Astrocyte of the cerebellum (primary cell): ENCODE measurements at regions of chr1 and their contacts with region 1.

Region 1: GRCh38 chr1:242477944-242478343 is 46.6 kb downstream of the PLD5 start:
- DNase-seq: no peak
- H3K4me3 ChIP-seq: no peak overlapping the region
- CTCF ChIP-seq: no peak

Region 2: DNA sequence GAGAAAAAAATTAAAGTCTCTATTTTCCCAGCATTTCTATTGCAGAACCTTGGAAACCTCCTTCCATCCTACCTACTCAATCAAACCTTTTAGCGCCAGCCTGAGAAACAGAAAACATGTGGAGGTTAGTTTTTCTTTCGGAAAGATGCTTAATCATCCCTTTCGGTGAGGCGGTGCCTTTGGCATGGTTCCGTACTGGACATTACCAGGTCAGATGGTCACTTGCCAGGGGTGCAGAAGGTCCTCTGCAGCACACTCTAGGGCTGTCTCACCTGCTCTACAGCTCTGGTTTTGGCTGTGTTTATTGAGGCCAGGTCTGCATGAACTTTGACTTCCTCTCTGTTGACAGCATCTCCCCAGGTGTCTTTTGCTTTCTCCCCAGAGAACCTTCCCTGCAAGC is 75.0 kb before region 1 on chr1:
- in situ Hi-C with region 1: no loop called
- DNase-seq: no peak
- H3K4me3 ChIP-seq: no peak overlapping the region
- CTCF ChIP-seq: no peak

Region 3: GRCh38 chr1:242416657-242417056 is 61.3 kb before region 1 on chr1:
- in situ Hi-C with region 1: no loop called
- DNase-seq: no peak
- H3K4me3 ChIP-seq: no peak overlapping the region
- CTCF ChIP-seq: no peak

Region 4: DNA sequence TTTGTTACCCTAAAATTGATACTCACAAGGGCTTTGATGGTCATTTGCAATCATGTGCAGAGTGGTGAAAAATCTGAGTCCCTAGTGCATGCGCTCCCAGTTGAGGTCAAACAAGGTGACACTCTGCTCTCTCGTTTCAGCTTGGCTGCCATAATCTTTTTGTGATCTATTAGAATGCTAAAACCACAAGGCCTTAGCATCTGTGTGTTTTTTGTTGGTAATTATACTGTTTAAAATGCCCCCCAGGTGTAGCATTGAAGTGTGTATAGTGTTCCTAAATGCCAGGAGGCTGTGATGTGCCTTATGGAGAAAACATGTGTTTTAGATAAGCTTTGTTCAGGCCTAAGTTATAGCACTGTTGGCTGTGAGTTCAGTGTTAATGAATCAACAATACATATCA is 42.7 kb before region 1 on chr1:
- in situ Hi-C with region 1: no loop called
- DNase-seq: no peak
- H3K4me3 ChIP-seq: no peak overlapping the region
- CTCF ChIP-seq: no peak

Region 5: GRCh38 chr1:242544071-242544470 is 66.1 kb after region 1 on chr1:
- in situ Hi-C with region 1: no loop called
- DNase-seq: no peak
- H3K4me3 ChIP-seq: no peak overlapping the region
- CTCF ChIP-seq: no peak

Region 6: DNA sequence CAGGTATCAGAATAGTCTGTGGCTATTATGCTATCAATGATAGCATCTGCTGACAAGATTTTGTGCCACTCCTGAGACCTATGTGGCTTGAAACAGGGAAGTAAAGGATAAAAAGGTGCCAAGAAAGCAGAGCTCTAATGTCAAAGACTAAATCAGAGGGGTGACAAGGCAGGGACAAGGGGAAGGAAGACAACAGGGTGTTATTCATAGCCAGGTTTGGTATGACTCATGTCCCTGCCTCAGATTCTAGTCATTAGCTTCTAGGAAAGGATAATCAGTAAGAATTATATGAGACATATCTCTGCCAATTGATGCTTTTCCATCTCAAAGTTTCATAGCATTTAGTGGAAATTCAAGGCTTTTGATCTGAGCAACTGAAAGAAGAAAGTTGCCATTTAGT is 78.3 kb after region 1 on chr1:
- in situ Hi-C with region 1: loop called (anchors 5 kb)
- DNase-seq: no peak
- H3K4me3 ChIP-seq: no peak overlapping the region
- CTCF ChIP-seq: no peak